GM12878 (cell line): ENCODE measurements at regions of chr14 and their contacts with region 1.

Region 1: GRCh38 chr14:64636208-64636979 is 67.8 kb upstream of the PLEKHG3 start:
- DNase-seq: no peak
- ATAC-seq: peak; percentile 89
- H3K4me3 ChIP-seq: no peak overlapping the region
- H3K27ac ChIP-seq: no peak overlapping the region
- H3K4me1 ChIP-seq: no peaks in the 10 kb centered on the region; the same call in 1 of the 2 replicates
- H3K27me3 ChIP-seq: no peaks in the 10 kb centered on the region
- CTCF ChIP-seq: peak; percentile 81 to 84 (median 81)
- EP300 ChIP-seq: no peak
- POLR2A ChIP-seq: no peak
- RAD21 ChIP-seq: peak; percentile 65

Region 2: GRCh38 chr14:64438181-64438841 is 198.1 kb before region 1 on chr14:
- CTCF ChIA-PET with region 1: interaction called, 46 read pairs
- POLR2A ChIA-PET with region 1: no interaction called
- RAD21 ChIA-PET with region 1: no interaction called
- SMC1A ChIA-PET with region 1: no interaction called
- in situ Hi-C with region 1: no loop called
- intact Hi-C with region 1: loop called (anchors 10 kb)
- DNase-seq: no peak
- ATAC-seq: no peak
- H3K4me3 ChIP-seq: no peak overlapping the region
- H3K27ac ChIP-seq: no peak overlapping the region
- H3K4me1 ChIP-seq: no peaks in the 10 kb centered on the region
- H3K27me3 ChIP-seq: no peaks in the 10 kb centered on the region
- CTCF ChIP-seq: no peak
- EP300 ChIP-seq: no peak
- POLR2A ChIP-seq: no peak
- RAD21 ChIP-seq: no peak

Region 3: GRCh38 chr14:64510825-64511671 is 125.3 kb before region 1 on chr14:
- CTCF ChIA-PET with region 1: interaction called, 11 read pairs
- POLR2A ChIA-PET with region 1: interaction called, 3 read pairs
- RAD21 ChIA-PET with region 1: interaction called, 4 read pairs
- SMC1A ChIA-PET with region 1: interaction called, 5 read pairs
- in situ Hi-C with region 1: no loop called
- intact Hi-C with region 1: loop called (anchors 5 kb)
- DNase-seq: no peak
- ATAC-seq: peak; percentile 50
- H3K4me3 ChIP-seq: peak overlapping the region; percentile 40; the same call in 1 of the 2 replicates
- H3K27ac ChIP-seq: peak overlapping the region; percentile 68
- H3K4me1 ChIP-seq: peaks cover 25% of the 10 kb centered on the region
- H3K27me3 ChIP-seq: no peaks in the 10 kb centered on the region
- CTCF ChIP-seq: peak; percentile 82 to 95 (median 84)
- EP300 ChIP-seq: no peak
- POLR2A ChIP-seq: no peak
- RAD21 ChIP-seq: peak; percentile 68

Region 4: GRCh38 chr14:64614805-64615391 is 21.5 kb before region 1 on chr14:
- CTCF ChIA-PET with region 1: interaction called, 11 read pairs
- POLR2A ChIA-PET with region 1: no interaction called
- RAD21 ChIA-PET with region 1: interaction called, 3 read pairs
- SMC1A ChIA-PET with region 1: interaction called, 3 read pairs
- in situ Hi-C with region 1: no loop called
- intact Hi-C with region 1: no loop called
- DNase-seq: no peak
- ATAC-seq: no peak
- H3K4me3 ChIP-seq: no peak overlapping the region
- H3K27ac ChIP-seq: no peak overlapping the region
- H3K4me1 ChIP-seq: no peaks in the 10 kb centered on the region
- H3K27me3 ChIP-seq: no peaks in the 10 kb centered on the region; a peak in 1 of 4 replicates
- CTCF ChIP-seq: no peak
- EP300 ChIP-seq: no peak
- POLR2A ChIP-seq: no peak
- RAD21 ChIP-seq: no peak

Region 5: DNA sequence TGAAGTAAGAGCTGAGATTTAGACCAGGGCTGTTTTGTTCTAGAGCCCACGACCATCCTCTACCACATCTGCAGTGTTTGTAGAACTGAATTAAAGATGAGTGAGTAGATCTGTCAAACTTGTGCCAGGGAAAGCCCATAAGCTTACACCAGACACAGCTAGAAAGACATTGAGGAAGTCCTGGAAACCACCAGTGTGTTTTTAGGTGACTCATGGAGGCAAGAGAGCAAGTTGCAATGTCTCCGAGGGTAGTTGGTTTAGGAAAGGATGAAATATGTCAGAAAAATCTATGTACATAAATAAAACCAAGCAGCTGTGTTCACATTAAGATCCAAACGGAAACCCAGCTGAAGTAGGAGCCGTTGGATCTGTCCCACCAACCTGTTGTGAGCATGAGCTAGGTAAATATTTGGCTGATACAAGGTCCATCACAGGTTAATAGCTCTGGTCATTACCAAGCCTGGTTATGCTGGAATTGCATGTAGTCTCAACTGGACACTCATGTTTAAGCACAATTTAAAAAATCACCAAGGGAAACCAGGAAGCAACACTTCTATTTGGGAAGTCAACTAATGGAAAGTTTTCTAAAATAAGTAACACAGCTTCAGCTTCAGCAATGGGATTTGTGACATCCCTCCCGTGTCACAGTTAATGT is 18.0 kb after region 1 on chr14:
- CTCF ChIA-PET with region 1: interaction called, 30 read pairs
- POLR2A ChIA-PET with region 1: interaction called, 7 read pairs
- RAD21 ChIA-PET with region 1: interaction called, 8 read pairs
- SMC1A ChIA-PET with region 1: interaction called, 7 read pairs
- in situ Hi-C with region 1: no loop called
- intact Hi-C with region 1: no loop called
- DNase-seq: peak; percentile 27
- ATAC-seq: peak; percentile 86
- H3K4me3 ChIP-seq: no peak overlapping the region
- H3K27ac ChIP-seq: no peak overlapping the region
- H3K4me1 ChIP-seq: no peaks in the 10 kb centered on the region; the same call in 1 of the 2 replicates
- H3K27me3 ChIP-seq: no peaks in the 10 kb centered on the region
- CTCF ChIP-seq: no peak
- EP300 ChIP-seq: no peak
- POLR2A ChIP-seq: no peak
- RAD21 ChIP-seq: no peak

Region 6: DNA sequence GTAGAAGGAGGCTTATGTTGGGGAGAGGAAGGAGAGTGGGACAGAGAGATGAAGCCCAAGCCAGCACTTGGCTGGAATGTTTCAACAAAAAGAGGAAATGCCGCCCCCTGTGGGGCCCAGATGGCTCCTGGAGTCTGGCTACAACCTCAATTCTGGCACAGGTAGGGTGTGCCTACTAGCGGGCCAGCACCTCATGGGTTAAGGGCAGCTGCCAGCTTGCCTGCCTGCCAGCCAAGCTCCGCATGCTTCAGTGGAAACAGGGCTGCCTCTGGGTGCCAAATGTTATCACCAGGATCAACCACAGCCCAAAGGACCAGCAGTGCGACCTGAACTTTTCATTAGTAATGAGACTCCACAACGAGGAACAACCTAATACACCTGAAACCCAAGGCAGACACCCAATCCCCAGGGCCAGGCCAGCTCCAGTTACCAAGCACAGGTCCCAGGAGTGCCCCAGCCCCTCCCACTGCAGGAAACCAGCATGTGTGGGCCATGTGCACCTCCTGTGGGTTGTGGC is 324.4 kb after region 1 on chr14:
- CTCF ChIA-PET with region 1: no interaction called
- POLR2A ChIA-PET with region 1: no interaction called
- RAD21 ChIA-PET with region 1: no interaction called
- SMC1A ChIA-PET with region 1: no interaction called
- in situ Hi-C with region 1: no loop called
- intact Hi-C with region 1: no loop called
- DNase-seq: no peak
- ATAC-seq: peak; percentile 34; the same call in 2 of the 3 replicates
- H3K4me3 ChIP-seq: no peak overlapping the region
- H3K27ac ChIP-seq: no peak overlapping the region
- H3K4me1 ChIP-seq: no peaks in the 10 kb centered on the region
- H3K27me3 ChIP-seq: no peaks in the 10 kb centered on the region
- CTCF ChIP-seq: no peak; a peak in 1 of 6 replicates
- EP300 ChIP-seq: no peak
- POLR2A ChIP-seq: no peak
- RAD21 ChIP-seq: no peak